ENCODE measurements at regions of chr12 and their contacts with region 1.

Region 1: GRCh38 chr12:98424726-98425401 is 90.5 kb upstream of the TMPO start:
- DNase-seq: peak; percentile 76
- H3K4me3 Mint-ChIP-seq: no peak overlapping the region
- H3K27ac Mint-ChIP-seq: no peak overlapping the region
- H3K4me1 Mint-ChIP-seq: peaks cover 4% of the 10 kb centered on the region
- H3K27me3 Mint-ChIP-seq: no peaks in the 10 kb centered on the region

Region 2: DNA sequence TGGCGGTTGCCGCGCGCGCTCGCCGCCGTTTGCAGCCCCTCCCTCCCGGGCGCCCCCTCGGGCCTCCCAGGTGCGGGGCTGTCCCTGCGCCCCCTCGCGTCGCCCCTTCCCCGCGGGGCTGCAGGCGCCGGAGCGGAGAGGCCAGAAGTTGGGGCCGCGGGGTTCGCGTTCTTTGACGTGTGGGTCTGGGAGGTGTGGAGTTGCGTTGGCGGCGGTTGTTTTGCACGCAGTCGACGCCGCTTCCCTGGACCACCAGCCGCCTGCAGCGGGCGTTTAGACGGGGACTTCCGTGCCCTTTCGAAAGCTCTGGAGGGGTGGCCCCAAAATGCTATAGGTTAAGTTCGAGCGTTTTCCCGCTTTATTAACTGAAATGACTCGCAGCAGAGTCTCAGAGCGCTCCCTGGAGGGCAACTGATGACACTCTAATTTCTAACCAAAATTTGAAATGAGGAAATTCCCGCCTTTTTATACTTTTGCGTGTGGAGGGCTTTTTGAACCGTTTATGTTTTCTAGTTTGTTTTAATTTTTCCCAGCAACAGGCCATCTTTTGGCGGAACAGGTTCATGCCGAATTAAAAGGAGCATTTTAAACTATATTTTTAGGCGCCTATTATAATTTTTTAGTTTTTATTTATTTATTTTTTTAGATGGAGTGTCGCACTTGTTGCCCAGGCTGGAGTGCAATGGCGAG is 91.5 kb after region 1 on chr12:
- CTCF ChIA-PET with region 1: no interaction called
- intact Hi-C with region 1: loop called (anchors 1 kb)
- DNase-seq: peak; percentile 96
- H3K4me3 Mint-ChIP-seq: peak overlapping the region; percentile 92
- H3K27ac Mint-ChIP-seq: peak overlapping the region; percentile 99
- H3K4me1 Mint-ChIP-seq: peaks cover 37% of the 10 kb centered on the region
- H3K27me3 Mint-ChIP-seq: no peaks in the 10 kb centered on the region

Region 3: DNA sequence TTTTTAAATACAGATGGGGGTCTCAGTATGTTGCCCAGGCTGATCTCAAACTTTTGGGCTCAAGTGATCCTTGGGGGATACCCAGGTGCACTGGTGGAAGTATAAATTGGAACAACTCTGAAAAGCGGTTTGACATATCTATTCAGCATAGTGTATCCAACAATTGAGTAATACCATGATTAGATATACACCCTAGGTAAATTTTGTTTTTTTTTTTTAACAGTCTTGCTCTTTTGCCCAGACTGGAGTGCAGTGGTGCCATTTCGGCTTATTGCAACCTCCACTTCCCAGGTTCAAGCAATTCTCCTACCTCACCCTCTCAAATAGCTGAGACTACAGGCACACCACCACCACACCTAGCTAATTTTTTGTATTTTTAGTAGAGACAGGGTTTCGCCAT is 137.0 kb after region 1 on chr12:
- CTCF ChIA-PET with region 1: interaction called, 3 read pairs
- intact Hi-C with region 1: loop called (anchors 1 kb)
- DNase-seq: no peak
- H3K4me3 Mint-ChIP-seq: no peak overlapping the region
- H3K27ac Mint-ChIP-seq: no peak overlapping the region
- H3K4me1 Mint-ChIP-seq: peaks cover 3% of the 10 kb centered on the region
- H3K27me3 Mint-ChIP-seq: no peaks in the 10 kb centered on the region

Region 4: GRCh38 chr12:98653866-98654493 is 229.1 kb after region 1 on chr12:
- CTCF ChIA-PET with region 1: no interaction called
- intact Hi-C with region 1: loop called (anchors 1 kb)
- DNase-seq: no peak
- H3K4me3 Mint-ChIP-seq: no peak overlapping the region
- H3K27ac Mint-ChIP-seq: no peak overlapping the region
- H3K4me1 Mint-ChIP-seq: peaks cover 15% of the 10 kb centered on the region
- H3K27me3 Mint-ChIP-seq: no peaks in the 10 kb centered on the region